Ovary (tissue), 10 donors: ENCODE measurements at regions of chr11 and their contacts with region 1.

Region 1: DNA sequence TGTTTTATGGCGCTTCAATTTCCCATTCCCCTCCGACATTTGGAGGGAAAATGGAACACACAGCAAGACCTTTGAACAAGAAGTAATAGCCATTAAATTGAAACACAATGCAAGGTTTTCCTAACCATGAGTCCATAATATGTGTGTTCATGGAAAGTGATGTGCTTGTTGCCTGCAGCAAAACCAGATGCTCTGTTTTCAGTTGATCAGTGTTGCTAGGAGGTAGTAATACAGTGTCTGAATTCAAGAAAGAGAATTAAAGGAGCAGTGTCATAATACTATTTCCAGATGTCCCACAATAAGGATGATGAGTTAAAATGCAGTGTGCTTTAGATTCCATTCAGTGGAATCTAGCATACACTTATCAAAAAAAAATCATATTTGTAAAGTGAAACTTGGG is 637.4 kb upstream of the API5 start:
- DNase-seq: no peak
- H3K4me3 ChIP-seq: no peak overlapping the region
- H3K27ac ChIP-seq: no peak overlapping the region
- H3K4me1 ChIP-seq: no peaks in the 10 kb centered on the region
- H3K27me3 ChIP-seq: no peaks in the 10 kb centered on the region
- CTCF ChIP-seq: no peak
- EP300 ChIP-seq: no peak
- POLR2A ChIP-seq: no peak

Region 2: GRCh38 chr11:41836431-41836830 is 838.0 kb before region 1 on chr11:
- intact Hi-C with region 1: loop called in 1 of 4 experiments (anchors 5 kb)
- DNase-seq: no peak
- H3K4me3 ChIP-seq: no peak overlapping the region
- H3K27ac ChIP-seq: no peak overlapping the region
- H3K4me1 ChIP-seq: no peaks in the 10 kb centered on the region
- H3K27me3 ChIP-seq: no peaks in the 10 kb centered on the region
- CTCF ChIP-seq: no peak
- EP300 ChIP-seq: no peak
- POLR2A ChIP-seq: no peak